Activated T-helper 2 cell treated with anti-CD3 and anti-CD28 coated beads, Interferon-gamma antibody, Interleukin-2, Interleukin-4, amounts not matched to agents 10 μg/mL and 5 μg/mL and 100 μg/mL, durations not matched to agents 14 hours and 24 hours and 36 hours (primary cell): ENCODE measurements at regions of chr3 and their contacts with region 1.

Region 1: DNA sequence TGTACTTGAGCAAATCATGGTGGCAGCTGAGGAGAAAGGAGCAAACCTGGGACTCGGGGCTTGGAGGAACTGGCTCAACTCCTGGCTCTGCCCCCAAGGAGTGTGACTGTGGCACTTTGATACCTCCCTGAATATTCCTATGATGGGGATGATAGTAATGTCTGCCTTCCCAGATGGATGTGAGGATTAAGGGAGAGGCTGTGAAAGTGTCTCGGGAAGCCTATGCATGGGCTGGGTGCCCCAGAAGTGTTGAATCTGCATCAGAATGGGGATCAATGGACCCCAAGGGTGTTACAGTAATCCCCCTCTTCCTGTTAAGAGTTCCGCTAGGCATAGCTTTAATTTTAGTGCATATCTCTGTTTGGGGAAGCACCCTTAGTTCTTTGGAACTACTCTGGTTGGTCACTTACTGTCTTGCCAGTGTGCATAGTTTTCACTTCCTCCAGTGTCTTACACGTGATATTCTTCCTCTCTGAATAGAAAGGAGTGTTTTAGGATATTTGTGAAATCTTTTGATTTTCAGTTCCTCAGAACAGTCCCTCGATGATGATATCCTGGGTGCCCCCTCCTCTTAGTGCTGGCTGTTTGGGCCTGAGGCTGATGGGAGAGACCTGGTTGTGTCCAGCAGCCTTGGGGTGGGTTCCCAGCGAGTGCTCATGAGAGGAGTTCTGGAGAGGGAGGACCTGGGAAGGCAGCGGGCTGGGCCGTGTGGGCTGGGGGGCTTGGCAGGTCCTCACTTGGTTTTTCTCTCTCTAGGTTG is 97.5 kb downstream of the CHDH start:
- DNase-seq: no peak
- H3K4me3 Mint-ChIP-seq: no peak overlapping the region
- H3K27ac Mint-ChIP-seq: peak overlapping the region; percentile 86
- H3K4me1 Mint-ChIP-seq: peaks cover 54% of the 10 kb centered on the region
- H3K27me3 Mint-ChIP-seq: no peaks in the 10 kb centered on the region

Region 2: GRCh38 chr3:53680028-53680427 is 68.7 kb before region 1 on chr3:
- intact Hi-C with region 1: no loop called
- DNase-seq: no peak
- H3K4me3 Mint-ChIP-seq: no peak overlapping the region
- H3K27ac Mint-ChIP-seq: no peak overlapping the region
- H3K4me1 Mint-ChIP-seq: peaks cover 3% of the 10 kb centered on the region
- H3K27me3 Mint-ChIP-seq: peaks cover 50% of the 10 kb centered on the region

Region 3: GRCh38 chr3:53696401-53697150 is 52.1 kb before region 1 on chr3:
- intact Hi-C with region 1: no loop called
- DNase-seq: no peak
- H3K4me3 Mint-ChIP-seq: no peak overlapping the region
- H3K27ac Mint-ChIP-seq: no peak overlapping the region
- H3K4me1 Mint-ChIP-seq: peaks cover 41% of the 10 kb centered on the region
- H3K27me3 Mint-ChIP-seq: peaks cover 12% of the 10 kb centered on the region

Region 4: GRCh38 chr3:53776494-53777101 is 27.9 kb after region 1 on chr3:
- intact Hi-C with region 1: no loop called
- DNase-seq: no peak
- H3K4me3 Mint-ChIP-seq: no peak overlapping the region
- H3K27ac Mint-ChIP-seq: no peak overlapping the region
- H3K4me1 Mint-ChIP-seq: peaks cover 24% of the 10 kb centered on the region
- H3K27me3 Mint-ChIP-seq: peaks cover 12% of the 10 kb centered on the region

Region 5: GRCh38 chr3:53891497-53892285 is 143.0 kb after region 1 on chr3 and contains the start of gene SELENOK:
- intact Hi-C with region 1: loop called (anchors 2 kb)
- DNase-seq: peak; percentile 98
- H3K4me3 Mint-ChIP-seq: peak within 1 kb of the TSS; percentile 93
- H3K27ac Mint-ChIP-seq: peak within 1 kb of the TSS; percentile 97
- H3K4me1 Mint-ChIP-seq: peaks cover 47% of the 10 kb centered on the region
- H3K27me3 Mint-ChIP-seq: peaks cover 19% of the 10 kb centered on the region
- total RNA-seq, gene SELENOK: 73.0 and 81.0 TPM in 2 replicates